PC-3 (cell line): ENCODE measurements at regions of chr2 and their contacts with region 1.

Region 1: GRCh38 chr2:218269899-218270720 is at the starts of genes AAMP and PNKD:
- DNase-seq: peak; percentile 99
- ATAC-seq: peak; percentile 87
- H3K4me3 ChIP-seq: peak within 1 kb of the TSS; percentile 90
- H3K27ac ChIP-seq: 0 out of 2 replicates have a peak within 1 kb of the TSS, but pooled peaks have one; percentile 2
- H3K4me1 ChIP-seq: peaks cover 19% of the 10 kb centered on the region
- H3K27me3 ChIP-seq: no peaks in the 10 kb centered on the region
- CTCF ChIP-seq: 0 out of 2 replicates have a peak, but pooled peaks have one; percentile 12
- total RNA-seq, gene AAMP: 272 and 312 TPM in 2 replicates
- total RNA-seq, gene PNKD: 95.5 and 97.7 TPM in 2 replicates

Region 2: DNA sequence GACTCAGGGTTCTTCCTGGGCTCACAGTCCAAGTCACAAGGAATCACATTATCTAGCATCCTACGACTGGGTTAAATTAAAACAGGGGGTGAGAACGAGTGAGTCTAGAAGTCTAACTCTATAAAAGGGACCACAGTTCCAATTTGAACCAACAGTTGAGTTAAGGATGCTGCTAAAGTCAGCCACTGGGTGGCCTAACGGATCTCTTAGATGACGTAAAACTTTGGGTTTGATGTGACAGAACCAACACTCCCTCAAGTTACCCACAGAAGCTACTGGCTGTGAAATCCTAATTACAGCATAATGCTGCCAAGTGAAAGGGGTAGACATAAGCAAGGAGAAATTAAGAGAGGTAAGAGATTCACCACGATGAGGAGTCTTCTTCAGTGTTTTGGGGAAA is 233.7 kb before region 1 on chr2:
- CTCF ChIA-PET with region 1: no interaction called
- POLR2A ChIA-PET with region 1: no interaction called
- intact Hi-C with region 1: no loop called
- DNase-seq: peak; percentile 6
- ATAC-seq: no peak
- H3K4me3 ChIP-seq: no peak overlapping the region
- H3K27ac ChIP-seq: no peak overlapping the region
- H3K4me1 ChIP-seq: no peaks in the 10 kb centered on the region
- H3K27me3 ChIP-seq: peaks cover 11% of the 10 kb centered on the region
- CTCF ChIP-seq: 0 out of 2 replicates have a peak, but pooled peaks have one; percentile 28

Region 3: DNA sequence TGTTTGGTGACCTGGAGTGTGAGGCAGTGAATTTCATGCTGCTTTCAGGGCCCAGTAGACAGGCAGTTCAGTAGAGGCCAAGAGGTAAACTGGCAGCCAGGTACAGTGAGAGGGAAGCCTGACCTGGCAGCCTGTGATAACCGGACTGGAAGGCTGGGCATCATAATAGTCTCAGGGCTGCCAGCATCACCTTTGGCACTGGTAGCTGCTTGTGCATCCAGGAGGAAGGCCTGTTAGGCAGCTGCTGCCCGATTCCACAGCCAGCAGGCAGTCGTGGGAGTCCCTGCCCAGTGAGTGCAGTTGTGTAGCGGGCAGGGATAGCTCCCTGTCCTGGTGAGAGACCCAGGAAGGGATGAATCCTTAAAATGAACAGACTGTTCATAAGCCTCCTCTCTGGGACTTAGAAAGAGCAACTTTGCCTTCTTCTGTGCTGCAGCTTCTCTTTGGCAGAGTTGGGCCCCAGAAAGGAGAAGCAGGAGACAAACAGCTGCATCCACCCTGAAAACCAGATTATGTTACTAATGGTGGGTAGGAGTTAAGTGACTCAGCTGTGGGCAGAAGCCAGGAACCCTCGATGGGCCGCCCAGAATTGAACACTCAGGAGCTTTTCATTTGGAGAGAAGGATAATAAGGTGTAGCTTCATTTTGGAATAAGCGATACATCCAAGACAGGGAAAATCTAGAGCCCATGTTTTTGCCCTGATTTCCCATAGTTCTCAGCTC is 17.4 kb before region 1 on chr2:
- CTCF ChIA-PET with region 1: no interaction called
- POLR2A ChIA-PET with region 1: no interaction called
- intact Hi-C with region 1: no loop called
- DNase-seq: no peak
- ATAC-seq: no peak
- H3K4me3 ChIP-seq: no peak overlapping the region
- H3K27ac ChIP-seq: no peak overlapping the region
- H3K4me1 ChIP-seq: no peaks in the 10 kb centered on the region
- H3K27me3 ChIP-seq: no peaks in the 10 kb centered on the region
- CTCF ChIP-seq: no peak

Region 4: DNA sequence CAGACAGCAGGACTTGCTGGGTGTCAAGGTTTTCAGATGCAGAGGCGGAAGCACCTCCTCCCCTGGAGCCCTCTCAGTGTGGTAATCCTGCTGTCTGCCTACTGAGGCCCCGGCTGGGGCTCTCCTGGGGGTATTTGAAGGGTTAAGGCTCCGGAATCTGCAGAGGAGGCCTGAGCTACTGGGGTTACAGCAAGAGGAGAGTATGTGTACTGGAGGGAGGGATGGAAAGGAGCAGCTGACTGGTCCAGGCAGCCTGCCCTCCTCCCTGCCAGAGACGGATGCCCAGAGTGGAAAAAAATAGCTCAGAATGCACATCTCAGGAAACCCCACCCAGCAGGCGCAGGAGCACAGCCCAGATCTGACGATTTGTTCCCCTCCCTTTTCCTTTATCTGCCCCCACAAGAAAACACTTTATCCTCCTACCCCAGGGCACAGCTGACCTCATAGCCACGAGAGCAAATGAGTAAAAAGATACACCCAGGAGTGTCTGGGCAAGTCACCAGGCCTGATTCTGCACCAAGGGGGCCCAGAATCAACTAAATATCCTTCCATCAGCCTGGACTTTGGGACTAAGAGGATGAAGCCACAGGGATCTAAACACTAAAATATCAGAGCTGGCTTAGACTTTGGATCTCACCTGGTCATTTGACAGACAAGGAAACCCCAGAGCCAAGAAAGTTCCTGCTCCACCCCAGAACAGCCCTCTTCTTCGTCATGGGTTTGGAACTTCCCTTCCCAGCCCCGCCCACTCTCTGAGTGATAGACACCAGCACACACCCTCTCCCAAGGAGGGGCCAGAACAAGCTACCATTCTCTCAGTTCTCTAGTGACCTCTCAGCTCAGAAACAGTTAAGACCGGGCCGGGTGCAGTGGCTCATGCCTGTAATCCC is 16.7 kb after region 1 on chr2:
- CTCF ChIA-PET with region 1: interaction called, 21 read pairs
- POLR2A ChIA-PET with region 1: interaction called, 13 read pairs
- intact Hi-C with region 1: loop called (anchors 1 kb)
- DNase-seq: peak; percentile 96
- ATAC-seq: peak; percentile 80
- H3K4me3 ChIP-seq: peak overlapping the region; percentile 56
- H3K27ac ChIP-seq: peak overlapping the region; percentile 98
- H3K4me1 ChIP-seq: peaks cover 78% of the 10 kb centered on the region
- H3K27me3 ChIP-seq: no peaks in the 10 kb centered on the region
- CTCF ChIP-seq: no peak

Region 5: GRCh38 chr2:218301176-218301819 is 31.2 kb after region 1 on chr2:
- CTCF ChIA-PET with region 1: interaction called, 4 read pairs
- POLR2A ChIA-PET with region 1: no interaction called
- intact Hi-C with region 1: loop called (anchors 2 kb)
- DNase-seq: peak; percentile 96
- ATAC-seq: peak; percentile 94
- H3K4me3 ChIP-seq: no peak overlapping the region
- H3K27ac ChIP-seq: no peak overlapping the region
- H3K4me1 ChIP-seq: no peaks in the 10 kb centered on the region
- H3K27me3 ChIP-seq: no peaks in the 10 kb centered on the region
- CTCF ChIP-seq: peak; percentile 93

Region 6: GRCh38 chr2:218691234-218691633 is 421.1 kb after region 1 on chr2:
- CTCF ChIA-PET with region 1: no interaction called
- POLR2A ChIA-PET with region 1: no interaction called
- intact Hi-C with region 1: no loop called
- DNase-seq: peak; percentile 19
- ATAC-seq: peak; percentile 58
- H3K4me3 ChIP-seq: no peak overlapping the region
- H3K27ac ChIP-seq: no peak overlapping the region
- H3K4me1 ChIP-seq: no peaks in the 10 kb centered on the region
- H3K27me3 ChIP-seq: no peaks in the 10 kb centered on the region
- CTCF ChIP-seq: no peak